Common myeloid progenitor, CD34-positive (primary cell): ENCODE measurements at regions of chr19 and their contacts with region 1.

Region 1: GRCh38 chr19:44723952-44724319 is 24.6 kb upstream of the BCL3 start:
- DNase-seq: peak; percentile 78 to 85 (median 82)
- H3K4me3 ChIP-seq: peak overlapping the region in 1 of 7 experiments; percentile 2
- H3K27ac ChIP-seq: no peak overlapping the region
- H3K4me1 ChIP-seq: peaks cover 10 to 76% (median 68%) of the 10 kb centered on the region in 4 experiments
- H3K27me3 ChIP-seq: no peaks in the 10 kb centered on the region

Region 2: GRCh38 chr19:44626048-44626624 is 97.8 kb before region 1 on chr19:
- CTCF ChIA-PET with region 1: no interaction called
- POLR2A ChIA-PET with region 1: no interaction called
- DNase-seq: no peak
- H3K4me3 ChIP-seq: no peak overlapping the region
- H3K27ac ChIP-seq: no peak overlapping the region
- H3K4me1 ChIP-seq: peaks cover 0 to 13% (median 11%) of the 10 kb centered on the region in 4 experiments
- H3K27me3 ChIP-seq: no peaks in the 10 kb centered on the region

Region 3: DNA sequence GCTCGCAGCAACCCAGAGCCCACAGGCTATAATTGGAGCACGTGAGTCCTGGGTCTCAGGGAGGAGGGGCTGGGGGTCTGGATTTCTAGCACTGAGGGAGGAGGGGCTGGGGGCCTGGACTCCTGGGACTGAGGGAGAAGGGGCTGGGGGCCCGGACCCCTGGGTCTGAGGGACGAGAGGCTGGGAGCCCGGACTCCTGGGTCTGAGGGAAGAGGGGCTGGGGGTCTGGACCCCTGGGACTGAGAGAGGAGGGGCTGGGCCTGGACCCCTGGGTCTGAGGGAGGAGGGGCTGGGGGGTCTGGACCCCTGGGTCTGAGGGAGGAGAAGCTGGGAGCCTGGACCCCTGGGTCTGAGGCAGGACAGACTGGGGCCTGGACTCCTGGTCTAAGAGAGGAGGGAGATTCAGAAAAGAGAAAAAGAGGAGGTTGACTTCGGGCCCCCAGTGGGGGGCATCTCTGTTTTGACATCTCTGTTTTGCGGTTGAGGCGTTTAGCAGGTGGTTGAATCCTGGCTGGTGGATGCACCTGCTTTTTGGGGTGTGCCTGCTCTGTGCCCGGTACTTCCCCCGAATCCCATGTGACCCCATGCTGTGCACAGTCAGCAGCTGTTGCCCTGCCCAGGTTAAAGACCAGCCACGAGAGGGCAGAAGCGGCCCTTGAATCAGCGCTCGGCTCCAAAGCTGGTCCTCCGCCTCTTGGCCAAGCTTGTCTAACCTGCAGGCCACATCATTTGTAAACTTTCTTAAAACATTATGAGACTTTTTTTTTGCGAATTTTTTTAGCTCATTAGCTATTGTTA is 69.8 kb before region 1 on chr19:
- CTCF ChIA-PET with region 1: interaction called, 20 read pairs
- POLR2A ChIA-PET with region 1: no interaction called
- DNase-seq: peak; percentile 84 to 94 (median 94)
- H3K4me3 ChIP-seq: no peak overlapping the region
- H3K27ac ChIP-seq: no peak overlapping the region
- H3K4me1 ChIP-seq: peaks cover 0 to 5% (median 2%) of the 10 kb centered on the region in 4 experiments
- H3K27me3 ChIP-seq: no peaks in the 10 kb centered on the region

Region 4: GRCh38 chr19:44712864-44713515 is 10.9 kb before region 1 on chr19:
- CTCF ChIA-PET with region 1: interaction called, 34 read pairs
- POLR2A ChIA-PET with region 1: no interaction called
- DNase-seq: peak in 2 of 3 donors; percentile 42 to 57
- H3K4me3 ChIP-seq: no peak overlapping the region
- H3K27ac ChIP-seq: no peak overlapping the region
- H3K4me1 ChIP-seq: peaks cover 0 to 15% (median 12%) of the 10 kb centered on the region in 4 experiments
- H3K27me3 ChIP-seq: no peaks in the 10 kb centered on the region

Region 5: DNA sequence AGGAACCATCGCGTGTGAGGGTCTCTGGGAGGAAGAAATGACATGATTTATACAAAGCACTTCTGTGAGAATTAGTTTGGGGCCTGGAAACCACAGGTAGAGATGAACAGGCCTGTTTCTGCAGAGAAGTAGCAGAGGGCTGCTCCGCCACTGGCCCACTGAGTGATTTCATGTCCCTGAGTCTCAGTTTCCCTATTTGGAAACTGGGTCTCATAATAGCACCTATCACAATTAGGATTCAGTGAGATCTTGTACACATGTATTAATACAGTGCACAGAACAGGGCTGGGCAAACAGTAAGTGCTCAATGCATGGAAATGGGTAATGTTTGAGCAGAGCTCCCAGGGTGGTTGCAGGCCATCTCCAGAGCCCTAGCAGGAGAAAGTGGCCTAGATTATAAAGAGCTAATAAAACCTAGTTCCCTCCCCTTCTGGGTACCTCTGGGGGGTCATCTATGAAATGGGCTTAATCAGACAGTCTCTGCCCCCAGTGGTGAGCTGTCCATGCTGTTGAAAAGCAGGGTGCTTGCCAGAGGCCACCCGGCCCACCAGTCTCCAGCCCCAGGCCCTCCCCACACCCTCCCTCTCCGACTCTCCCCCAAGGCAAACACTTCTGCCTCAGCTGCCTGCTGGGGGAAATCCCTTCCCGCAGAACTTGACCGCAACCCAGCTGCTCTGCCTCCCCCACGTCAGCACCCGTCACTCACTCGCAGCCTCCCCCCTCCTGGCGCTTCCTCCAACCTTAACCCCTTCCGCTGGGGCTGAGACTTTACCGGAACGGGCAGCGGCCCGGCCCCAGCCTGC is 29.1 kb after region 1 on chr19:
- CTCF ChIA-PET with region 1: interaction called, 47 read pairs
- POLR2A ChIA-PET with region 1: interaction called, 17 read pairs
- DNase-seq: peak; percentile 98 to 100 (median 100)
- H3K4me3 ChIP-seq: peak overlapping the region in 6 of 7 experiments; percentile 25 to 92 (median 59)
- H3K27ac ChIP-seq: peak overlapping the region; percentile 36 to 88
- H3K4me1 ChIP-seq: peaks cover 22 to 82% (median 78%) of the 10 kb centered on the region in 4 experiments
- H3K27me3 ChIP-seq: no peaks in the 10 kb centered on the region

Region 6: DNA sequence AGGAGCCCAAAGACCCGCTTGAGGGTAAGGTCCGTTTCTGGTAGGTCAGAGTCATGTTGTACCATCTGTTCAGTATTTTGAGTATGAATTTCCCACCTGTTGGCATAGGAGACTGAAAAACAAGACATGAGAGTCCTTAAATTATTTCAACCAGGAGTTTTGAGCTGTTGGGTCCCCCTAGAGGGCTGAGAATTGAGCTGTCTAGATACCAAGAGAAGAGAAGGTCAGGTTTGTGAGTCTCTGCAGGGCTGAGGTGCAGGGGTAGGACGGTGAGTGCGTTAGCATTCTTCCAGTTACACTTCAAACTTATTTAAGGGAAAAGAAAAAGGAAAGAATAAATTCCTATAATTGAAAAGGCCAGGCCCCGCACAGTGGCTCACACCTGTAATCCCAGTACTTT is 58.8 kb after region 1 on chr19:
- CTCF ChIA-PET with region 1: interaction called, 15 read pairs
- POLR2A ChIA-PET with region 1: no interaction called
- DNase-seq: no peak
- H3K4me3 ChIP-seq: no peak overlapping the region
- H3K27ac ChIP-seq: no peak overlapping the region
- H3K4me1 ChIP-seq: peaks cover 0 to 14% (median 10%) of the 10 kb centered on the region in 4 experiments
- H3K27me3 ChIP-seq: peaks cover 0 to 2% (median 0%) of the 10 kb centered on the region in 5 experiments